Thyroid gland (tissue), 4 donors: ENCODE measurements at regions of chr1 and their contacts with region 1.

Region 1: GRCh38 chr1:25543425-25544242 is at the start of gene LDLRAP1:
- DNase-seq: peak; percentile 75 to 76
- H3K4me3 ChIP-seq: peak within 1 kb of the TSS; percentile 82 to 91 (median 87)
- H3K27ac ChIP-seq: peak within 1 kb of the TSS; percentile 64 to 76 (median 70)
- H3K4me1 ChIP-seq: peaks cover 23 to 31% of the 10 kb centered on the region in 2 donors
- H3K27me3 ChIP-seq: no peaks in the 10 kb centered on the region
- CTCF ChIP-seq: peak in 2 of 6 experiments; percentile 13 to 14
- POLR2A ChIP-seq: peak; percentile 87 to 96
- total RNA-seq, gene LDLRAP1: 25.1 to 40.9 (median 34.4) TPM

Region 2: GRCh38 chr1:25608488-25609178 is 65.0 kb after region 1 on chr1:
- intact Hi-C with region 1: loop called (anchors 5 kb)
- DNase-seq: peak; percentile 87 to 92
- H3K4me3 ChIP-seq: no peak overlapping the region
- H3K27ac ChIP-seq: no peak overlapping the region
- H3K4me1 ChIP-seq: no peaks in the 10 kb centered on the region
- H3K27me3 ChIP-seq: no peaks in the 10 kb centered on the region
- CTCF ChIP-seq: peak in 5 of 6 experiments; percentile 25 to 54 (median 49)
- POLR2A ChIP-seq: no peak